Aorta (tissue), 5 donors: ENCODE measurements at regions of chr3 and their contacts with region 1.

Region 1: DNA sequence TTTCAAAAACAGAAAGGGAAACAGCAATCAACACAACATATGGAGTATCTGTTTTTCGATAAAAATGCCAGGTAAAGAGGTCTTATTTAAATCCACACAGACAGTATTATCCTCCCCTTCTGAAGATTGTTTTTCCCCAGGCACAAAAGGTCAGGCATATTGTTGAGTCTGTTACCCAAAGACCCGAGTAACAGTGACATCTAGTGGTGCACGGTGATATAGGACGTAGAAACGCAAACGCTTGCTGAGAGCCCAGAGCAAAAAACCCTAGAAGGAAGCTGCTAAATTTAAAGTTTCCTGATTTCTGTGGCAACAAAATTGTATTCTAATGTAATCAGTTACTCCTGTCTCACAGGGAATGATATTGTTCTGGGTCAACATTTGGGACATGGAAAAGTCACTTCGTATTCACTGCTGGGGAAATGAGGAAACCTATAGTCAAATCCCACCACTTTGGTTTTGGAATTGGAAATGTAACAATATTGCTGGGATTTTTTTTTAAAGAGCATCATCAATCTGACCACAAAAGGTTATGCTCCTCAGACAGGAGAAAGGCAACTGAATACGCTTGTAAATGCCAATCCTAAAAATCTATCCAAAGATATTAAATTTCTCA is 312.7 kb upstream of the CCDC54 start:
- DNase-seq: peak in 1 of 2 donors; percentile 60
- ATAC-seq: peak; percentile 91
- H3K4me3 ChIP-seq: no peak overlapping the region
- H3K27ac ChIP-seq: no peak overlapping the region
- H3K4me1 ChIP-seq: peaks cover 2 to 5% of the 10 kb centered on the region in 2 donors
- H3K27me3 ChIP-seq: no peaks in the 10 kb centered on the region

Region 2: DNA sequence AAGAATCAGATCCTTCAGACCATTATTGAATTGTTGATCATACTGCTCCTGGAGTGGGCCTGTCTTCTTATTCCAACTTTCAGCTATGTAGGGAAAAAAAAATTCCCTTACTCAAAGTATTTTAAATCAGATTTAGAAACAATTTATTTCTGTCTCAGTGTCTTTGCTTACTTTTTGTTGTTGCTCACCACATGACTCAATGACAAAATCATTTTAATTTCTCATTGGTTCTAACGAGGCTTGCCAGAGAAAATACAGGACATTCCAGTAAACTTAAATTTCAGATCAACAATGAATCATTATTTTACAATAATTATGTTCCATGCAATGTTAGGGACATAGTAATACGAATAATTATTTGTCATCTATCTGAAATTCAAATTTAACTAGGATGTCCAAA is 447.3 kb before region 1 on chr3:
- intact Hi-C with region 1: loop called in 1 of 2 experiments (anchors 5 kb)
- DNase-seq: no peak
- ATAC-seq: no peak
- H3K4me3 ChIP-seq: no peak overlapping the region
- H3K27ac ChIP-seq: peak overlapping the region in 1 of 2 donors; percentile 57
- H3K4me1 ChIP-seq: peaks cover 0 to 8% of the 10 kb centered on the region in 2 donors
- H3K27me3 ChIP-seq: no peaks in the 10 kb centered on the region

Region 3: GRCh38 chr3:106824856-106825255 is 239.7 kb before region 1 on chr3:
- intact Hi-C with region 1: loop called (anchors 5 kb)
- DNase-seq: no peak
- ATAC-seq: peak; percentile 72
- H3K4me3 ChIP-seq: no peak overlapping the region
- H3K27ac ChIP-seq: no peak overlapping the region
- H3K4me1 ChIP-seq: peaks cover 0 to 5% of the 10 kb centered on the region in 2 donors
- H3K27me3 ChIP-seq: no peaks in the 10 kb centered on the region

Region 4: GRCh38 chr3:106830334-106830733 is 234.2 kb before region 1 on chr3:
- intact Hi-C with region 1: loop called (anchors 5 kb)
- DNase-seq: no peak
- ATAC-seq: no peak
- H3K4me3 ChIP-seq: no peak overlapping the region
- H3K27ac ChIP-seq: no peak overlapping the region
- H3K4me1 ChIP-seq: peaks cover 0 to 5% of the 10 kb centered on the region in 2 donors
- H3K27me3 ChIP-seq: no peaks in the 10 kb centered on the region

Region 5: GRCh38 chr3:107328069-107328468 is 263.5 kb after region 1 on chr3:
- intact Hi-C with region 1: no loop called
- DNase-seq: no peak
- ATAC-seq: no peak
- H3K4me3 ChIP-seq: no peak overlapping the region
- H3K27ac ChIP-seq: no peak overlapping the region
- H3K4me1 ChIP-seq: no peaks in the 10 kb centered on the region
- H3K27me3 ChIP-seq: no peaks in the 10 kb centered on the region